Ovary (tissue), 10 donors: ENCODE measurements at regions of chr12 and their contacts with region 1.

Region 1: GRCh38 chr12:2624543-2625288 is 170.1 kb upstream of the FKBP4 start:
- DNase-seq: no peak
- H3K4me3 ChIP-seq: no peak overlapping the region
- H3K27ac ChIP-seq: no peak overlapping the region
- H3K4me1 ChIP-seq: no peaks in the 10 kb centered on the region
- H3K27me3 ChIP-seq: no peaks in the 10 kb centered on the region
- CTCF ChIP-seq: no peak
- EP300 ChIP-seq: no peak
- POLR2A ChIP-seq: no peak

Region 2: GRCh38 chr12:3376779-3377455 is 752.2 kb after region 1 on chr12:
- intact Hi-C with region 1: loop called in 1 of 4 experiments (anchors 5 kb)
- DNase-seq: no peak
- H3K4me3 ChIP-seq: no peak overlapping the region
- H3K27ac ChIP-seq: no peak overlapping the region
- H3K4me1 ChIP-seq: peaks cover 4% of the 10 kb centered on the region
- H3K27me3 ChIP-seq: no peaks in the 10 kb centered on the region
- CTCF ChIP-seq: no peak
- EP300 ChIP-seq: no peak
- POLR2A ChIP-seq: no peak